ENCODE measurements at regions of chr1 and their contacts with region 1.

Region 1: DNA sequence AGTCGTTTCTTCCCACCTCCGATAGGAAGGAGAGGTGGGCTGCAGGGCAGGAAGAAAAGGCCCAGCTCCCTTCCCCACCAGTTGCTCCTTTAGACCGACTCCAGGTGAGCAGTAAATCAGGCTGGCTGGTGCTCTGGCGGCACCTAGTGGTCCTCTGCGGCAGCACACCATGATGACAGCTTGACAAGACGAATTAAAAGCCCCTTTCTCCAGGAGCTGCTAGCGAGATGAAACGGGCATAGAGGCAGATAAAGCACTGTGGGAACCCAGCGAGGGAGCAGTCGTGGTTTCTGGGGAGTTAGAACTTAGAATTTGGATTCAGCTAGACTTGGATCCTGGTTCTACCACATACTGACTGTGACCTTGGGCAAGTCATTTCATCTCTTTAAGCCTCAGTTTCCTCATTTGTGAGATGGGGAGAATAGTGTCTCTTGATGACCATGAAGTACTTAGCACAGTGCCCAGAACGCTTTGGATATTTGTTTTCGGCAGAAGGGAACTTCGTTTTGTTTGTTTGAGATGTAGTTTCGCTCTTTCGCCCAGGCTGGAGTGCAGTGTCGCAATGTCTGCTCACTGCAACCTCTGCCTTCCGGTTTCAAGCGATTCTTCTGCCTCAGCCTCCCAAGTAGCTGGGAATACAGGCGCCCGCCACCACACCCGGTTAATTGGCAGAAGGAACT is 21.8 kb upstream of the COL9A2 start:
- DNase-seq: peak; percentile 84
- CTCF ChIP-seq: peak; percentile 97

Region 2: DNA sequence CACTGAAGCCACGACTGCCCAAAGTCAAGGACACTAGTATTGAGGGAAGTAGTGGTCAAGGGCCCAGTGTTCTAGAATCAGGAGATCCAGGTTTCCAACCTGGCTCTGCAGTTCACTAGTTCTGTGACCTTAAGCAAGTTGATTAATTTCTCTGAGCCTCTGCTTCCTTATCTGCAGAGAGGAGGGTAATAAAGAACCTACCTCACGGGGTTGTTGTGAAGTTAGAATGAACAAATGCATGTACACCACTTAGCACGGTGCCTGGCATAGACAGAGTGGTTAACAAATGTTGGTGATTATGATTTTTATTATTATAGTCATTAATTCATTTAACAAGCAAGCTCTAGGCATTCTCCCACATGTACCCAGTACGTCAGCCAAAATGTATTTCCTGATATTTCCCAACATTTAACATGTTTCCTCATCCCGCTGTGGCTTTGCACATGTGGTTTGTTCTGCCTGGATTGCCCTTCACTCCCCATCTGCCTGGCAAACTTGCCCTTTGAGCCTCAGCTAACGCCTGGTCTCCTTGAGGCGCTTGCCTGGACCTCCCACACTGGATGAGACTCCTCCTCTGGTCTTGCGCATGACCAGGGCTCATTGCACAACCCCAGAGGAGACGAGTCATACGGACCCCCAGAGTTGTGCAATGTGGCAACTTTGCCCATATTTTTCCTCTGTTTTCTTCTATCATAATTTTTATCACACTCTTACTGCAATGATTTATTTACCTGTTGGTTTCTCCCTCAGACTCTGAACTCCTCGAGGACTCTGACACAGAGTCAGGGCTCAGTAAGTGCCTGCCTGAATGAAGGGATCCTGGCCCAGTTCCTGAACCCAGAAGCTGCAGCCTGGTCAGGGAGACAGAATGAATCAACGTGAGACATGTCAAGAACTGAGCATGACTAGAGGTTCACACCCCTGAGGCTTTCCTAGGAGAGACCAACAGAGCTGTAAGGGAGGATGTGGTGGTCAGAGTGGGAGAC is 404.6 kb before region 1 on chr1:
- CTCF ChIA-PET with region 1: no interaction called
- POLR2A ChIA-PET with region 1: no interaction called
- DNase-seq: no peak
- CTCF ChIP-seq: no peak

Region 3: DNA sequence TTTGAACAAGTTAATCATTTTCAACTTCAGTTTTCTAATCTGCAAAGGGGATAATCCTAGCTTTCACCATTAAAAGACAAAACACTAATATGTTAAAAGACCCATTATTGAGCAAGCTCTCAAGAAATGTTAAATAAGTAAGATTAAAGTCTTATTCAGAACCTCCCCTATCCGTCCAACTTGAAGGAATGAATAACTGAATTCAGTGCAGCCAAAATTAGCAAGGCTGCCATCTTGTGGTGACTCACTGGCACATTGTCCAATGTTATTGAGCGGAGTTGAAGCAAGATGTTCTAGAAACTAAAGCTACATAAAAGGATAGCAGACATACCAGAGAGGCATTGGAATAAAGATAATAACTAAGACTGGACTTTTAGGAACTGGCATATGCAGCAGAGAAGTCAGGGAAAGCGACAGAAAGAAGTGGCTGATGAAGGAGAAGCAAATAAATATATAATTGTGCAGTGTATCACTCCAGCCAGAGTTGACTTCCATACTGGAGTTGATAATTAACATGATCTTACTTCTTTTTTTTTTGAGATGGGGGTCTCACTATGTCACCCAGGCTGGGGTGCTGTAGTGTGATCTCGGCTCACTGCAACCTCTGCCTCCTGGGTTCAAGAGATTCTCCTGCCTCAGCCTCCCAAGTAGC is 306.5 kb before region 1 on chr1:
- CTCF ChIA-PET with region 1: interaction called, 13 read pairs
- POLR2A ChIA-PET with region 1: no interaction called
- DNase-seq: peak; percentile 57
- CTCF ChIP-seq: peak; percentile 81

Region 4: GRCh38 chr1:40102101-40102500 is 236.8 kb before region 1 on chr1:
- CTCF ChIA-PET with region 1: interaction called, 10 read pairs
- POLR2A ChIA-PET with region 1: no interaction called
- DNase-seq: no peak
- CTCF ChIP-seq: no peak

Region 5: GRCh38 chr1:40161125-40161887 is 177.6 kb before region 1 on chr1 and contains the start of gene RLF:
- CTCF ChIA-PET with region 1: interaction called, 182 read pairs
- POLR2A ChIA-PET with region 1: no interaction called
- DNase-seq: peak; percentile 96
- CTCF ChIP-seq: no peak

Region 6: GRCh38 chr1:40315239-40315794 is 23.6 kb before region 1 on chr1:
- CTCF ChIA-PET with region 1: interaction called, 168 read pairs
- POLR2A ChIA-PET with region 1: no interaction called
- DNase-seq: peak; percentile 88
- CTCF ChIP-seq: peak; percentile 90

Region 7: GRCh38 chr1:40363721-40364120 is 24.8 kb after region 1 on chr1:
- CTCF ChIA-PET with region 1: interaction called, 21 read pairs
- POLR2A ChIA-PET with region 1: no interaction called
- DNase-seq: peak; percentile 48
- CTCF ChIP-seq: peak; percentile 25

Region 8: DNA sequence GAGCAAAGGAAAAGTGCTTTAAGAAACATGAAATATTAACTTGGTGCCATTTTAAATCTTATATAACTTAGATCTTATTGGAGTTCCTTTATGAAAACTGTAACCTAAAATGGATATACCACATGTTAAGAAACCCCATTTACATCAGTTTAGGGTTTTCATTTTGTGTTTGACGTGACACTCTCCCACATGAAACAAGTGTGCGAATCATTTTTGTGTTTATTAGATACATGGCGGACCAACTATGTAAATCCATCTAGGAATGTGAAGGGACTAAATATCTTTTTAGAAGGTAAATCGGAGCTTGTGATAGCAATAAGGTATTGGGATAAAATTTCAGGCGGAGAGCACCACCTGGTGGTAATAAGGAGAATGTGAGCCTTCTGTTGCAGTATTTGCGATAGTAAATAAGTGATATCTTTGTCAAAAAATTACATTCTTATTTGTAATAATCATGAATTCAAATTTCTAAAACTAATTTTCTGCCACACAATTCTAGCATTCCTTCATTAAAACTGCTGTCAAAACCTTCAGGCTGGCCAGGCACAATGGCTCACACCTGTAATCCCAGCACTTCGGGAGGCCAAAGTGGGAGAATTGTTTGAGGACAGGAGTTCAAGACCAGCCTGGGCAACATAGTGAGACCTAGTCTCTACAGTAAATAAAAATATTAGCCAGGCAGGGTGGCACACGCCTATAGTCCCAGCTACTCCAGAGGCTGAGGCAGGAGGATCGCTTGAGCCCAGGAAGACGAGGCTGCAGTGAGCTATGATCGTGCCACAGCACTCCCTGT is 66.0 kb after region 1 on chr1:
- CTCF ChIA-PET with region 1: interaction called, 46 read pairs
- POLR2A ChIA-PET with region 1: no interaction called
- DNase-seq: no peak
- CTCF ChIP-seq: peak; percentile 69

Measured in GM10248 (cell line).